Panc1 (cell line): ENCODE measurements at regions of chr14 and their contacts with region 1.

Region 1: DNA sequence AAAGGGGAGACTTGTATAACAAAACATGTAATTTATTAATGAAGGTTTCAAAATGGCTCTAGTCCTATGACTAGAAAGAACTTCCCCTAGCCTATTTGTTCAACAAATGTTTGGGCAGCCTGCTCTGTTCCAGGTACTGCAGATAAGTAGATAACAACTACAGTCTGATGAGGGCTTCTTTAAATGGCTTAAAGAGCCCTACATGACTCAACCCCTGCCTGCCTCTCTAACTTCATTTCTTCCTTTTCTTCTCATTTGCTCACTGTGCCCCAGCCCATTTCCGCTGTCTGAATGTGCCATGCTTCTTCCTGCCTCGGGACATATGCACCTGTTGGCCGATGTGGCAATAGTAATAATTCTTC is 21.4 kb downstream of the ALDH6A1 start:
- DNase-seq: no peak
- ATAC-seq: no peak
- H3K4me3 ChIP-seq: no peak overlapping the region
- H3K27ac ChIP-seq: no peak overlapping the region
- H3K4me1 ChIP-seq: no peaks in the 10 kb centered on the region
- H3K27me3 ChIP-seq: no peaks in the 10 kb centered on the region
- CTCF ChIP-seq: no peak

Region 2: GRCh38 chr14:74084277-74085046 is 21.7 kb after region 1 on chr14 and contains the starts of genes ALDH6A1 and LIN52:
- CTCF ChIA-PET with region 1: interaction called, 10 read pairs
- POLR2A ChIA-PET with region 1: interaction called, 9 read pairs
- in situ Hi-C with region 1: no loop called
- intact Hi-C with region 1: no loop called
- DNase-seq: peak; percentile 98
- ATAC-seq: peak; percentile 97
- H3K4me3 ChIP-seq: peak within 1 kb of the TSS; percentile 94 to 98
- H3K27ac ChIP-seq: peak within 1 kb of the TSS; percentile 93
- H3K4me1 ChIP-seq: peaks cover 7% of the 10 kb centered on the region; the same call in 1 of the 2 replicates
- H3K27me3 ChIP-seq: no peaks in the 10 kb centered on the region
- CTCF ChIP-seq: no peak
- total RNA-seq, gene ALDH6A1: 2.1 TPM
- total RNA-seq, gene LIN52: 6.7 TPM